Natural killer cell (primary cell): ENCODE measurements at regions of chr21 and their contacts with region 1.

Region 1: DNA sequence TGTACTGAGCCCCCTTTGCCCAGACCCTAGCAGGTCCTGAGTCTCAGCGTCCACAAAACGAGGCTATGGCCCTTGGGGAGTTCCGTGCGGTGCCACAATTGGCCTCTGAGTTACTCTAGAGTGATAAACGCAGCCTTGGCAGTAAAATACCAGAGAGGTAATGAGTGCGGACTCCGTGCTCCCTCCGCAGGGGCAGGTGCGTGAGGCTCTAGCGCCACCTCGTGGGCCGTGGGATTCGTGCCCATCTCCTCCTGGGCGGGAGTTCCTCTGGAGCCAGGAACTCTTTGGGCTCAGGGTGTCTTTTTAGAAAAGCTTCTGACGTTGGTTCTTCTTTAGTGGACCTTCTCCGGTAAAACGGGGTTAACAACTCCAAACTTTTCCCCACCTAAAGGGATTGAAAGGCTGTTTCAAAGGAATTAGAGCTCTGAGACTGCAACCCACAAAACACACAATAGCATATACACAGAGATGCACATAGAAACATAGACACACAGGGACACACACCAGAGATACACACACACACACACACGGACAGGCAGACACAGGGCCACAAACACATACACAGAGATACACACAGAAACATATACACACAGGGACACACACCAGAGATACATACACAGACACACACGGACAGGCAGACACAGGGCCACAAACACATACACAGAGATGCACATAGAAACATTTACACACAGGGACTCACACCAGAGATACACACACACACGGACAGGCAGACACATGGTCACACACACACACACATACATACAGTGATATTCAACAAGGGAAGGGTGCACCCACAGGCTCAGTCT is 99.4 kb downstream of the KCNJ15 start:
- DNase-seq: peak; percentile 67 to 81
- ATAC-seq: peak; percentile 73 to 91 (median 75)
- H3K4me3 ChIP-seq: no peak overlapping the region
- H3K4me3 Mint-ChIP-seq: no peak overlapping the region
- H3K27ac ChIP-seq: no peak overlapping the region
- H3K27ac Mint-ChIP-seq: no peak overlapping the region
- H3K4me1 ChIP-seq: peaks cover 6% of the 10 kb centered on the region
- H3K4me1 Mint-ChIP-seq: no peaks in the 10 kb centered on the region
- H3K27me3 ChIP-seq: no peaks in the 10 kb centered on the region
- H3K27me3 Mint-ChIP-seq: peaks cover 13 to 26% of the 10 kb centered on the region in 2 donors
- CTCF ChIP-seq: peak; percentile 90

Region 2: DNA sequence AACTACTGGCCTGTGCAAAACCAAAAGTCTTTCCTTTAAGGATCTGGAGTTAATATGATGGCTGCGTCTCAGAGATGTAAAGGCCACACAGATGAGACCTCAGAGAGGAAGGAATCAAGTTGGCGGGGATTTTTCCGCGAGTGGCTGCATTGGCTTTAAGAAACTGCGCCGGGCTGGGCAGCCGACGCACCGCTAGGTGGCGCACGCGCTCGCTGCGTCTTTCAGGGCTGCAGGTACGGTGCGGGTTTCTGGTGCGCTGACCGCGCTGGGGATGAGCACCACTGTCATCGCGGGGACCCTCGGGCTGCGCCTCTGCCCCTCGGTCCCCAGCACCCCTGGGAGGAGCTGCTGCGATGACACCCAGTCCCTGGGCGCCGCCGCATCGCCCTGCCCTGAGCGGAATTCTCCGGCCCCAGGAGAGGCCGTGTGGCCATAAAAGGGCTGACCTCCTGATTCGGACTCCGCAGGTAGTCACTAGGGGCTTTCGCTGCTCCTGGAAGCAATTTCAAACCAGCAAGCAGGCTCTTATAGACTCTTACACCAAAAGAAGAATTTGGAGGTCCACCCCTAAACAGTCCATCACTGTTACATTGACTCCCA is 680.9 kb before region 1 on chr21:
- intact Hi-C with region 1: loop called (anchors 10 kb)
- DNase-seq: peak; percentile 37 to 72
- ATAC-seq: peak in 2 of 3 donors; percentile 52 to 71
- H3K4me3 ChIP-seq: no peak overlapping the region
- H3K4me3 Mint-ChIP-seq: no peak overlapping the region
- H3K27ac ChIP-seq: no peak overlapping the region
- H3K27ac Mint-ChIP-seq: no peak overlapping the region
- H3K4me1 ChIP-seq: peaks cover 5% of the 10 kb centered on the region
- H3K4me1 Mint-ChIP-seq: no peaks in the 10 kb centered on the region
- H3K27me3 ChIP-seq: no peaks in the 10 kb centered on the region
- H3K27me3 Mint-ChIP-seq: peaks cover 19 to 24% of the 10 kb centered on the region in 2 donors
- CTCF ChIP-seq: peak; percentile 90

Region 3: GRCh38 chr21:38159355-38159754 is 196.8 kb before region 1 on chr21:
- intact Hi-C with region 1: loop called (anchors 1 kb)
- DNase-seq: peak in 1 of 2 donors; percentile 74
- ATAC-seq: peak in 1 of 3 donors; percentile 33
- H3K4me3 ChIP-seq: no peak overlapping the region
- H3K4me3 Mint-ChIP-seq: no peak overlapping the region
- H3K27ac ChIP-seq: no peak overlapping the region
- H3K27ac Mint-ChIP-seq: no peak overlapping the region
- H3K4me1 ChIP-seq: no peaks in the 10 kb centered on the region
- H3K4me1 Mint-ChIP-seq: no peaks in the 10 kb centered on the region
- H3K27me3 ChIP-seq: no peaks in the 10 kb centered on the region
- H3K27me3 Mint-ChIP-seq: peaks cover 0 to 14% of the 10 kb centered on the region in 2 donors
- CTCF ChIP-seq: peak; percentile 75

Region 4: GRCh38 chr21:38219049-38219628 is 137.1 kb before region 1 on chr21:
- intact Hi-C with region 1: loop called (anchors 1 kb)
- DNase-seq: peak; percentile 31 to 82
- ATAC-seq: peak; percentile 66 to 82 (median 81)
- H3K4me3 ChIP-seq: no peak overlapping the region
- H3K4me3 Mint-ChIP-seq: no peak overlapping the region
- H3K27ac ChIP-seq: no peak overlapping the region
- H3K27ac Mint-ChIP-seq: no peak overlapping the region
- H3K4me1 ChIP-seq: no peaks in the 10 kb centered on the region
- H3K4me1 Mint-ChIP-seq: peaks cover 0 to 6% of the 10 kb centered on the region in 2 donors
- H3K27me3 ChIP-seq: no peaks in the 10 kb centered on the region
- H3K27me3 Mint-ChIP-seq: peaks cover 6 to 7% of the 10 kb centered on the region in 2 donors
- CTCF ChIP-seq: peak; percentile 92

Region 5: GRCh38 chr21:38322311-38322950 is 33.8 kb before region 1 on chr21:
- intact Hi-C with region 1: no loop called
- DNase-seq: no peak
- ATAC-seq: no peak
- H3K4me3 ChIP-seq: no peak overlapping the region
- H3K4me3 Mint-ChIP-seq: no peak overlapping the region
- H3K27ac ChIP-seq: no peak overlapping the region
- H3K27ac Mint-ChIP-seq: no peak overlapping the region
- H3K4me1 ChIP-seq: no peaks in the 10 kb centered on the region
- H3K4me1 Mint-ChIP-seq: no peaks in the 10 kb centered on the region
- H3K27me3 ChIP-seq: no peaks in the 10 kb centered on the region
- H3K27me3 Mint-ChIP-seq: peaks cover 12 to 22% of the 10 kb centered on the region in 2 donors
- CTCF ChIP-seq: no peak